CD4-positive, alpha-beta T cell (primary cell): ENCODE measurements at regions of chr7 and their contacts with region 1.

Region 1: DNA sequence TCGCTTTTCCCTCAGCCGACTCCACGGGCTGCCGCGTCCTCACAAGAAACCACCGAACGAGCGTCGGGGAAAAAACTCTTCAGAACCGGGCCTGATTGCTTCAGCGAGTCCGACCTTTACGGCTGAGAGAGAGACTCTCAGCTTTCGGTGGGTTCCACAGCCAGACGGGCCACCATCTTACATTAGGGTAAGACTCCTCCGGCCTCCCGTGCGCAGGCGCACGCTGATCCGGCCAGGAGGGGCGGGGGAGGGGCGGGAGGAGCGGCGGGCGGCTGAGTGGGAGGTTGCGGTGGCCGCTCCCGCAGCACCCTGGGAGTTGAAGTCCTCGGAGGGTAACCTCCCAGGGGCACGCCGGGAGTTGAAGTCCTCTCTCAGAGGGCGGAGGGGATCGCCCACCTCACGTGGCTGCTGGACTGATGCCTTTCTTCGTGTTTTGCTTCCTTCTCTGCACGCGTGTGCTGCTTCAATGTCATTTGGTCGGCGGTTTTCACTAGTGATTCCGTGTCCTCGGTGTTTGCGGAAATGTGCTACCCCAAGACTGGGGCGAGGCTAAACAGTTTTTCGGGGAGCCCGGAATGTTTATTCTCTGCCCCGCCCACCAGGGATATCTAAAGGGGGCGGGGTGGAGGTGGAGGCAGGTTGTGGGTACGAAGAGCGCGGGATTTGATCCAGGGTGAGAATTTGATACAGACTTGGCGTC is at the start of gene CNOT4:
- DNase-seq: peak; percentile 94 to 98 (median 97)
- ATAC-seq: peak; percentile 94
- H3K4me3 ChIP-seq: peak within 1 kb of the TSS; percentile 91
- H3K4me3 Mint-ChIP-seq: no peak within 1 kb of the TSS
- H3K27ac ChIP-seq: peak within 1 kb of the TSS; percentile 90 to 96
- H3K27ac Mint-ChIP-seq: no peak within 1 kb of the TSS
- H3K4me1 ChIP-seq: peaks cover 16% of the 10 kb centered on the region
- H3K4me1 Mint-ChIP-seq: peaks cover 14% of the 10 kb centered on the region
- H3K27me3 ChIP-seq: no peaks in the 10 kb centered on the region
- H3K27me3 Mint-ChIP-seq: no peaks in the 10 kb centered on the region
- CTCF ChIP-seq: no peak
- total RNA-seq, gene CNOT4: 24.0 to 29.8 TPM

Region 2: DNA sequence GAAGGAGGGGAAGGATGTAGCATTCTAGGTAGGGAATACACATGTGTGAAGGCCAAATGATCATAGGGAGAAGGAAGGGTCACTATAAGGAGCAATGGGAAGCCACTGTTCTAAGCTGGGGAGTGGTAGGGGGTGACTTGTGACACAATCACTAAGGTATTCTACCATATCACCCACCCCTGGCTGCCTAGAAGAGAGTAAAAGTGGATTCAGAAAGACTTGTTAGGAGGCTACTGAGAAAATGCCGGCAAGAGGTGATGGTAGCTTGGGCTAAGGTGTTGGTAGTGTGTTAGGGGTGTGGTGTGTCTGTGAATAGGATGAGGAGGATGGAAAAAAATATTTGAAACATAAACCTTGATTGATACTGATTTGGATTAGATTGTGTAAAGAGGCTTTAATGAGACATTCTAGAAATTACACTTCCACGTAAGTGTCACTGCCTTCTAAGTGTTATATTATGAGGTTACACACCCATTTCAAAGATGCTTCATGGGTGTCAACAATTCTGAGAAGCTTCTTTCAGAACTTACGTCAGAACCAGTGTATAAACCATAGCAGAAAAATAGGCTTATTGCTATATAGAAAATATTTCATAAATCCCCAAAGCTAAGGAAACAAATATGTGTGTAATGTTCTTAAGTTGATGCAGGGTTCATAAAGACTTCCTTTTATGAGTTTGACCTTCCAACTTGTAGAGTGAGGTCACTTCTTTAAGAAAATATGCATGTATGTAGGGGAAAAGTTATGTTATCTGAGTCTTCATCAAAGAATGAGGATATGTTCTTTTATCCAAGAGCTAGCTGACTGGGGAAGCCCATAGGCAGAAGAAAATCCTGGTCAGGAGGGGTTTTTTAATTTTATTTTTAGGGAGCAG is 869.0 kb before region 1 on chr7:
- CTCF ChIA-PET with region 1: no interaction called
- POLR2A ChIA-PET with region 1: no interaction called
- intact Hi-C with region 1: loop called in 1 of 2 experiments (anchors 5 kb)
- DNase-seq: peak in 1 of 14 experiments; percentile 54
- ATAC-seq: no peak
- H3K4me3 ChIP-seq: no peak overlapping the region
- H3K4me3 Mint-ChIP-seq: no peak overlapping the region
- H3K27ac ChIP-seq: no peak overlapping the region
- H3K27ac Mint-ChIP-seq: peak overlapping the region; percentile 3
- H3K4me1 ChIP-seq: peaks cover 20% of the 10 kb centered on the region
- H3K4me1 Mint-ChIP-seq: peaks cover 32% of the 10 kb centered on the region
- H3K27me3 ChIP-seq: no peaks in the 10 kb centered on the region
- H3K27me3 Mint-ChIP-seq: no peaks in the 10 kb centered on the region
- CTCF ChIP-seq: no peak

Region 3: DNA sequence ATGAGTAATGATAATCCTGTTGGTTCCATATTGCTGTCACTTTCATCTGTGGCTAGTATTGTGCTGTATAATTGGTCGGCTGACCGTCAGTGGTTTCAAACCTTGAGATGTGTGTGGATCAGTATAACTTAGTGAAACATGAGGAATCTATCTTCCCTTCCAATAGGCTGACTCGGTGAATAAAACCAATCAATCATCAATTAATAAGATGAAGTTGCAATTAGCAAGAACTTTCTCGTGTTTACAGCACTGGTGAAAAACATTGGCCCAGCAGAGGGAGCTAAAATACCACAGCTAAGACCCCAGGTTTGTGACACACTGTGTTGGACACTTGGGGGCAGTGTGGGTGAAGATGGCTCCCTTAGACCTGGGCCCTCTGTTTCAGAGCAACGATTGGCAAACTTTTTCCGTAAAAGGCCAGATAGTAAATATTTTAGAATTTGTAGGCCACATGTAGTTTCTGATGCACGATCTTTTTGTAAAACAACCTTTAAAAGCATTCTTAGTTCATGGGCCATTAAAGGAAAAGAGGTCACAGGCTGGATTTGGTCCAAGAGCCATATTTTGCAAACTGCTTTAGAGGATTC is 228.6 kb before region 1 on chr7:
- CTCF ChIA-PET with region 1: no interaction called
- POLR2A ChIA-PET with region 1: no interaction called
- intact Hi-C with region 1: loop called in 1 of 2 experiments (anchors 5 kb)
- DNase-seq: peak; percentile 53 to 90 (median 68)
- ATAC-seq: peak; percentile 98
- H3K4me3 ChIP-seq: no peak overlapping the region
- H3K4me3 Mint-ChIP-seq: no peak overlapping the region
- H3K27ac ChIP-seq: no peak overlapping the region
- H3K27ac Mint-ChIP-seq: no peak overlapping the region
- H3K4me1 ChIP-seq: peaks cover 16% of the 10 kb centered on the region
- H3K4me1 Mint-ChIP-seq: peaks cover 15% of the 10 kb centered on the region
- H3K27me3 ChIP-seq: peaks cover 0 to 3% of the 10 kb centered on the region in 2 experiments
- H3K27me3 Mint-ChIP-seq: peaks cover 11% of the 10 kb centered on the region
- CTCF ChIP-seq: peak; percentile 95

Region 4: GRCh38 chr7:135389971-135390370 is 120.1 kb before region 1 on chr7:
- CTCF ChIA-PET with region 1: no interaction called
- POLR2A ChIA-PET with region 1: no interaction called
- intact Hi-C with region 1: no loop called
- DNase-seq: no peak
- ATAC-seq: no peak
- H3K4me3 ChIP-seq: no peak overlapping the region
- H3K4me3 Mint-ChIP-seq: no peak overlapping the region
- H3K27ac ChIP-seq: no peak overlapping the region
- H3K27ac Mint-ChIP-seq: no peak overlapping the region
- H3K4me1 ChIP-seq: no peaks in the 10 kb centered on the region
- H3K4me1 Mint-ChIP-seq: peaks cover 14% of the 10 kb centered on the region
- H3K27me3 ChIP-seq: no peaks in the 10 kb centered on the region
- H3K27me3 Mint-ChIP-seq: no peaks in the 10 kb centered on the region
- CTCF ChIP-seq: no peak

Region 5: GRCh38 chr7:135553346-135553745 is 43.3 kb after region 1 on chr7:
- CTCF ChIA-PET with region 1: no interaction called
- POLR2A ChIA-PET with region 1: interaction called, 4 read pairs
- intact Hi-C with region 1: loop called (anchors 1 kb)
- DNase-seq: no peak
- ATAC-seq: no peak
- H3K4me3 ChIP-seq: no peak overlapping the region
- H3K4me3 Mint-ChIP-seq: no peak overlapping the region
- H3K27ac ChIP-seq: no peak overlapping the region
- H3K27ac Mint-ChIP-seq: no peak overlapping the region
- H3K4me1 ChIP-seq: peaks cover 5% of the 10 kb centered on the region
- H3K4me1 Mint-ChIP-seq: no peaks in the 10 kb centered on the region
- H3K27me3 ChIP-seq: no peaks in the 10 kb centered on the region
- H3K27me3 Mint-ChIP-seq: peaks cover 4% of the 10 kb centered on the region
- CTCF ChIP-seq: no peak

Region 6: GRCh38 chr7:135558337-135558767 is 48.3 kb after region 1 on chr7:
- CTCF ChIA-PET with region 1: no interaction called
- POLR2A ChIA-PET with region 1: interaction called, 4 read pairs
- intact Hi-C with region 1: loop called (anchors 1 kb)
- DNase-seq: peak; percentile 29 to 85 (median 52)
- ATAC-seq: peak; percentile 57
- H3K4me3 ChIP-seq: peak overlapping the region; percentile 99
- H3K4me3 Mint-ChIP-seq: no peak overlapping the region
- H3K27ac ChIP-seq: peak overlapping the region; percentile 93 to 99
- H3K27ac Mint-ChIP-seq: no peak overlapping the region
- H3K4me1 ChIP-seq: peaks cover 13% of the 10 kb centered on the region
- H3K4me1 Mint-ChIP-seq: peaks cover 20% of the 10 kb centered on the region
- H3K27me3 ChIP-seq: no peaks in the 10 kb centered on the region
- H3K27me3 Mint-ChIP-seq: no peaks in the 10 kb centered on the region
- CTCF ChIP-seq: peak; percentile 57

Region 7: DNA sequence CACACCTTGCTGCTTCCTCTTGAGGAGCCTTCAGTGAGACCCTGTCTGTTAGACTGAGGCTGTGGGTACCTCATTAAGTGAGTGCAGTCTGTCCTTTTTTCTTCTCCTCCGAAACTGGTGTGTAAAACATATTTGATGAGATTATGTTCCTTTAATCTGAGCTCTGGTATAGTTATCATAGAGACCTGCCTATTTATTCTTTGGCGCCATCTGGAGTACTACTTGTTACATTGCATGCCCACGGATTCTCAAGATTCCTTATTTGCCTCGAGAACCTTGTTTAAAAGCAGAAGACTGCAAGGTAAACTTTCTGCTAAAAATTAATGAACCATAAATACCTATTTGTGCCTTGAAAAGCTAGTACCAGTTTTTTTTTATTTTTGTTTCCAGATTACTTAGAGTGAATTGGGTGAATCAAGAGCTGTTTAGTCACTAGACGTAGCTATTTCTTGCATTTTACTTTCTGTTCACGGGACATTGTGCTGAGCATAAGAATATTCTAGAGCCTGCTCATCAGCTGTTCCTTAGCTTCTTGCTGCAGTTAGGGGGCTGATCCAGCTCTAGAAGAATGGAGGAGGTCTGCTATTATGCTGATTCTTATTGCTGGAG is 135.3 kb after region 1 on chr7:
- CTCF ChIA-PET with region 1: interaction called, 3 read pairs
- POLR2A ChIA-PET with region 1: no interaction called
- intact Hi-C with region 1: loop called (anchors 5 kb)
- DNase-seq: peak in 4 of 14 experiments; percentile 20 to 64 (median 56)
- ATAC-seq: peak; percentile 92
- H3K4me3 ChIP-seq: no peak overlapping the region
- H3K4me3 Mint-ChIP-seq: no peak overlapping the region
- H3K27ac ChIP-seq: no peak overlapping the region
- H3K27ac Mint-ChIP-seq: no peak overlapping the region
- H3K4me1 ChIP-seq: no peaks in the 10 kb centered on the region
- H3K4me1 Mint-ChIP-seq: no peaks in the 10 kb centered on the region
- H3K27me3 ChIP-seq: no peaks in the 10 kb centered on the region
- H3K27me3 Mint-ChIP-seq: no peaks in the 10 kb centered on the region
- CTCF ChIP-seq: peak; percentile 77